Activated B cell treated with CpG ODN at 0.5 μM for 24 hours (primary cell): ENCODE measurements at regions of chr1 and their contacts with region 1.

Region 1: GRCh38 chr1:160519642-160520435 is 3.2 kb downstream of the SLAMF6 start:
- DNase-seq: no peak
- ATAC-seq: peak; percentile 41
- H3K4me3 Mint-ChIP-seq: peak overlapping the region; percentile 97
- H3K27ac Mint-ChIP-seq: peak overlapping the region; percentile 95
- H3K4me1 Mint-ChIP-seq: peaks cover 92% of the 10 kb centered on the region
- H3K27me3 Mint-ChIP-seq: no peaks in the 10 kb centered on the region
- CTCF ChIP-seq: no peak

Region 2: GRCh38 chr1:160451119-160451858 is 68.5 kb before region 1 on chr1:
- CTCF ChIA-PET with region 1: no interaction called
- POLR2A ChIA-PET with region 1: interaction called, 3 read pairs
- intact Hi-C with region 1: loop called (anchors 5 kb)
- DNase-seq: no peak
- ATAC-seq: no peak
- H3K4me3 Mint-ChIP-seq: peak overlapping the region; percentile 26
- H3K27ac Mint-ChIP-seq: peak overlapping the region; percentile 74
- H3K4me1 Mint-ChIP-seq: peaks cover 76% of the 10 kb centered on the region
- H3K27me3 Mint-ChIP-seq: no peaks in the 10 kb centered on the region
- CTCF ChIP-seq: no peak

Region 3: DNA sequence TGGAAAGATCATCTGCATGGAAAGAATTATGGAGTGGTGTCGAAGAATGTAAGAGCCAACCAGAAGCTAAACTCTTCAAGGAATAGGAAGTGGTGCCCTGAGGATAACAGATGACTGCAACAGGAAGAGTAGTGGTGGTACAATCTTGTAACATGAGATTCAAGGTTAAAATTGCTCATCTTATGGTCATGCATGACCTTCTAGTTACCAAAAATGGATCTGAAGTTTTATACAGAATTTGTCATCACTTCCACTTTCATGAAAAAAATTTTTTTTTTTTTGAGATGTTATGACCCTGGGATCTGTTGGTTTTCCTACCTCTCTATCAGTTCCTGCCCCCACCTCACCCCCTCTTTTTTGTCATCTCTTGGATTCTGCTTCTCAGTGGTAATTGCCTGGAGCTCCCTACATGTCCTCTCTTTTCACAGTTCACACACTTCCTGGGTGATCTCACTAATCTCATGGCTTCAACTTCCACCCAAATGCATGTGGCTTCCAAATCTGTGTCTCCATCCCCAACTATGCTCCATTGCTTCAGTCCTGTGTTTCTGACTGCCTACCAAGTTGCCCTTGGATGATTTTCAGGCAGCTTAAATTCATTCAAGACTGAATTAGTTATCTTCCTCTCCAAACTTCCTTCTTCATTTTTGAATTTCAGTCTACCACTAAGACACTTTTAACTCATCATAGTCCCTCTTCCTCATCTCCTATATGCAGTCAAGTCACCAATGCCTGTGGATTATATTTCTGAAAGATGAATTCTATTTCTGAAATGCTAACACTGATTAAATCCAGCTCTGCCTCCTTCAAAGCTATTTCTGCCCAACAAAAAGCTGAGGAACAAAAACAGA is 45.2 kb before region 1 on chr1:
- CTCF ChIA-PET with region 1: no interaction called
- POLR2A ChIA-PET with region 1: interaction called, 3 read pairs
- intact Hi-C with region 1: loop called (anchors 2 kb)
- DNase-seq: no peak
- ATAC-seq: peak; percentile 95
- H3K4me3 Mint-ChIP-seq: no peak overlapping the region
- H3K27ac Mint-ChIP-seq: no peak overlapping the region
- H3K4me1 Mint-ChIP-seq: peaks cover 16% of the 10 kb centered on the region
- H3K27me3 Mint-ChIP-seq: no peaks in the 10 kb centered on the region
- CTCF ChIP-seq: no peak

Region 4: DNA sequence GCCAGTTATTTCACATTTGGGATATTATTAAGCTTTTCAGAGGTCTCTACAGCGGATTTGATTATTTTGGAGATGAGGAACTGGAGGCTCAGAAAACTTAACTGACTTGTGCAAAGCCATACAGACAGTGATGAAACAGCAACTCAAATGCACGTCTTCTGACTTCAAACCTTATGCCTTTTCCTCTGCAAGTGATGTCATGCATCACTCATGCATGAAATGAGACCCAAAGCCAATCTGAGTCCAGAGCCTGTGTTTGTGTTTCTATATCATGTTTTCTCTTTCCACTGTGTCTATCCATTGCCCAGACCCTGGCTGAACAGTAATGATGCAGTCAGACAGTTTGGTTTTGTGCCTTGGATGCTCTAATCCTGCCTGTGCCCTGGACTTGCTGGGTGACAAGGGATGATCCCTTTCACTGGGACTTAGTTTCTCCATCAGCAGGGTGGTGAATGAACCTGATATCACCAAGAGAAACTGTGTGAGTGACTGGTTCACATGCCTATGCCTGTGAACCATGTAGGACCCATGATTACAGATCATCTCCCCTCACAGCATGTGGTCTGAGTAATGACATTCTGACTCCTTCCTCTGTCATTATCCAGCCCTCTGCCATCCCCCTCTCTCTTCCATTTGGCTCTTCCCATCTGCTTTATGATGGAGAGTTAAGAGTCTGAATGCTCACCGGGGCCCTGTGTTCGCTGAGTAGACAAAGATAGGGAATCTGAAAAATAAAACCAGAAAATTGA is 30.2 kb before region 1 on chr1:
- CTCF ChIA-PET with region 1: interaction called, 5 read pairs
- POLR2A ChIA-PET with region 1: interaction called, 17 read pairs
- intact Hi-C with region 1: loop called (anchors 2 kb)
- DNase-seq: no peak
- ATAC-seq: peak; percentile 8
- H3K4me3 Mint-ChIP-seq: peak overlapping the region; percentile 49
- H3K27ac Mint-ChIP-seq: no peak overlapping the region
- H3K4me1 Mint-ChIP-seq: peaks cover 3% of the 10 kb centered on the region
- H3K27me3 Mint-ChIP-seq: no peaks in the 10 kb centered on the region
- CTCF ChIP-seq: no peak

Region 5: GRCh38 chr1:160499631-160500030 is 20.2 kb before region 1 on chr1:
- CTCF ChIA-PET with region 1: no interaction called
- POLR2A ChIA-PET with region 1: interaction called, 3 read pairs
- intact Hi-C with region 1: loop called (anchors 2 kb)
- DNase-seq: no peak
- ATAC-seq: no peak
- H3K4me3 Mint-ChIP-seq: no peak overlapping the region
- H3K27ac Mint-ChIP-seq: peak overlapping the region; percentile 54
- H3K4me1 Mint-ChIP-seq: peaks cover 82% of the 10 kb centered on the region
- H3K27me3 Mint-ChIP-seq: no peaks in the 10 kb centered on the region
- CTCF ChIP-seq: no peak

Region 6: GRCh38 chr1:160539990-160540858 is 20.4 kb after region 1 on chr1:
- CTCF ChIA-PET with region 1: interaction called, 6 read pairs
- POLR2A ChIA-PET with region 1: interaction called, 7 read pairs
- intact Hi-C with region 1: loop called (anchors 1 kb)
- DNase-seq: no peak
- ATAC-seq: peak; percentile 95
- H3K4me3 Mint-ChIP-seq: peak overlapping the region; percentile 56
- H3K27ac Mint-ChIP-seq: peak overlapping the region; percentile 96
- H3K4me1 Mint-ChIP-seq: peaks cover 58% of the 10 kb centered on the region
- H3K27me3 Mint-ChIP-seq: no peaks in the 10 kb centered on the region
- CTCF ChIP-seq: no peak

Region 7: GRCh38 chr1:160550572-160551034 is 30.8 kb after region 1 on chr1:
- CTCF ChIA-PET with region 1: interaction called, 4 read pairs
- POLR2A ChIA-PET with region 1: interaction called, 28 read pairs
- intact Hi-C with region 1: no loop called
- DNase-seq: no peak
- ATAC-seq: no peak
- H3K4me3 Mint-ChIP-seq: no peak overlapping the region
- H3K27ac Mint-ChIP-seq: peak overlapping the region; percentile 90
- H3K4me1 Mint-ChIP-seq: peaks cover 86% of the 10 kb centered on the region
- H3K27me3 Mint-ChIP-seq: no peaks in the 10 kb centered on the region
- CTCF ChIP-seq: no peak

Region 8: GRCh38 chr1:160653620-160654016 is 133.8 kb after region 1 on chr1:
- CTCF ChIA-PET with region 1: no interaction called
- POLR2A ChIA-PET with region 1: no interaction called
- intact Hi-C with region 1: no loop called
- DNase-seq: no peak
- ATAC-seq: peak; percentile 78
- H3K4me3 Mint-ChIP-seq: peak overlapping the region; percentile 65
- H3K27ac Mint-ChIP-seq: peak overlapping the region; percentile 93
- H3K4me1 Mint-ChIP-seq: peaks cover 92% of the 10 kb centered on the region
- H3K27me3 Mint-ChIP-seq: no peaks in the 10 kb centered on the region
- CTCF ChIP-seq: no peak